Heart right ventricle (tissue), 16 donors: ENCODE measurements at regions of chr3 and their contacts with region 1.

Region 1: DNA sequence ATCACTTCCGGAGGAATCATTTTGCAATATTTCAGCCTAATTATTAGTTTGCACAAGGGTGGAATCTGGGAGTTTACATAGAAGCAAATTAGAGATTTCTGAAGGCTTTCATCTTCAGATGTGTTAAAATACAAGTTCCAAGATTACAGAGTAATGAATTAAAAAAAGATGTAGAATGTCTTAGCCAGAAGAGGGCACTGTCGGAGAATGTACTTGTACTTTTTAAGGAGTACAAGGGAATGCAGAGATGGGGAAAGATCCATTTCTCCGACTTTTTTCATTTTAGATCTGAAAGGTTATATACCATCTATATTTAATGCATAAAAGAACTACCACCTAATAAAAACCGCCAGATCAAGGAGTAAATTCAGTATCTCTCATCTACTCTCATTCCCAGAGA is 43.1 kb upstream of the WDR5B start:
- DNase-seq: peak in 1 of 2 donors; percentile 18
- ATAC-seq: no peak
- H3K4me3 ChIP-seq: no peak overlapping the region
- H3K27ac ChIP-seq: no peak overlapping the region
- H3K4me1 ChIP-seq: no peaks in the 10 kb centered on the region
- H3K27me3 ChIP-seq: no peaks in the 10 kb centered on the region
- CTCF ChIP-seq: peak in 8 of 9 donors; percentile 20 to 59 (median 46)

Region 2: DNA sequence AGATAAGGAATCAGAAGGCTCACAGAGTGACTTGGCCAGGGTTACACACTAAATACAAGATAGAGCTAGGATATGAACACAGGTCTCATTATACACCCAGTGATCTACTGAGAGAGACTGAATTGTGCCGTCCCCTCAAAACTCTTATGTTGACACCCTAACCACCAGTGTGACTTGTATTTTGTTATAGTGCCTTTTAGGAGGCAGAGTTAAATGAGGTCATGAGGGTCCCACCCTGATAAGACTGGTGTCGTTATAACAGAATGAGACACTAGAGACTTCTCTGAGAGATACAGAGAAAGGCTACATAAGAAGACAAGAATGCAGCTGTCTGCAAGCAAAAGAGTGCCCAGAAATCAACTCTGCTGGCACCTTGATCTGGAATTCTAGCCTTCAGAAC is 43.1 kb after region 1 on chr3:
- intact Hi-C with region 1: loop called in 1 of 10 experiments (anchors 5 kb)
- DNase-seq: no peak
- ATAC-seq: peak in 7 of 8 donors; percentile 27 to 86 (median 52)
- H3K4me3 ChIP-seq: no peak overlapping the region
- H3K27ac ChIP-seq: no peak overlapping the region
- H3K4me1 ChIP-seq: peaks cover 4 to 77% (median 40%) of the 10 kb centered on the region in 9 donors
- H3K27me3 ChIP-seq: no peaks in the 10 kb centered on the region
- CTCF ChIP-seq: no peak